PC-3 (cell line): ENCODE measurements at regions of chr1 and their contacts with region 1.

Region 1: GRCh38 chr1:20775700-20776099 is 11.4 kb downstream of the HP1BP3 start:
- DNase-seq: no peak
- ATAC-seq: no peak
- H3K4me3 ChIP-seq: no peak overlapping the region
- H3K27ac ChIP-seq: no peak overlapping the region
- H3K4me1 ChIP-seq: no peaks in the 10 kb centered on the region; the same call in 1 of the 2 replicates
- H3K27me3 ChIP-seq: no peaks in the 10 kb centered on the region
- CTCF ChIP-seq: no peak

Region 2: GRCh38 chr1:20931930-20932436 is 156.3 kb after region 1 on chr1:
- CTCF ChIA-PET with region 1: no interaction called
- POLR2A ChIA-PET with region 1: interaction called, 19 read pairs
- intact Hi-C with region 1: no loop called
- DNase-seq: no peak
- ATAC-seq: no peak
- H3K4me3 ChIP-seq: no peak overlapping the region
- H3K27ac ChIP-seq: no peak overlapping the region
- H3K4me1 ChIP-seq: no peaks in the 10 kb centered on the region
- H3K27me3 ChIP-seq: no peaks in the 10 kb centered on the region
- CTCF ChIP-seq: no peak

Region 3: DNA sequence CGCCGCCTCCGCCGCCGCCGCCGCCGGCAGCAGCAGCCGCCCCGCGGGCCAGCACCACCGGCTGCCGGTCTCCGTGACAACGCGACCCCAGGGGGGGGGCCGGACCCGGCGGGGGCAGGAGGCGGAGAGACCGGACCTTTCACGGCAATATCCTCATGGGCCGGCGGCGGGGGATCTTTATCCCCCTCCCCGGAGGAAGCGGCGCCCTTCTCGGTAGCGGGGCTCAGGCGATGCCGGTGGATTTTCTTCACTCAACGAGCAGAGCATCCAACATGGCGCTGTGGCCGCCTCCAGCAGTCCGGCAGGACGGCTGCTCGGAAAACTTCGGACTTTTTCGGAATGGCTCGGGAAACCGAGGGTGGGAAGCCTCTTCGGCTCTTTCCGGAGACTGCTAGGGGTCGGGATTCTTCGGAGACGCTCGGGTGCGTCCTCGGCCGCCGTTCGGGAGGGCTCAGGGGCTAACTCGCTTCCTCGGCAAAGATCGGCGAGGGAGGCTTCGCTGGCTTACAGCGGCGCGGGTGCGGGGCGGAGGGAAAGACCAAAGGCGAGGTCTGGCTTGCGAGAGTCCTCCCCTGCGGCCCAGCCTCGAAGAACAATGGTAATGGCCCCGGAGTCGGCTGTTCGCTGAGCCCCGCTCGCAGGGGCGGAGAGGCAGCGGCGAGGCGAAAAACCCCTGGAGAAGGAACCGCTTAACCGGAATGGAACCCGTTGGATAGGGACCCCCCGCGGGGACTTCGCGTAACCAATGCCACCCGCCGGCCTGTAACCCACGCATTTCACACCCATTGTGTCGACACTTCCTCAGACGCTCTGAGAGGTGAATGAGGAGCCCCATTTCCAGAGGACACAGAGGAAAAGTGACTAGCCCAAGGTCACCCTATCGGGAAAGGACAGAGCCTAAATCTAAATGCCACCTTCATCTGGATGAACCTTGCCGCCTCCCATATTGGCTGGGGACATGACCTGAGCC is 401.2 kb after region 1 on chr1 and contains the start of gene EIF4G3:
- CTCF ChIA-PET with region 1: no interaction called
- POLR2A ChIA-PET with region 1: no interaction called
- intact Hi-C with region 1: no loop called
- DNase-seq: peak; percentile 99
- ATAC-seq: peak; percentile 97
- H3K4me3 ChIP-seq: peak within 1 kb of the TSS; percentile 91
- H3K27ac ChIP-seq: no peak within 1 kb of the TSS; the same call in 1 of the 2 replicates
- H3K4me1 ChIP-seq: peaks cover 13% of the 10 kb centered on the region
- H3K27me3 ChIP-seq: no peaks in the 10 kb centered on the region
- CTCF ChIP-seq: no peak
- total RNA-seq, gene EIF4G3: 16.9 and 25.0 TPM in 2 replicates

Region 4: DNA sequence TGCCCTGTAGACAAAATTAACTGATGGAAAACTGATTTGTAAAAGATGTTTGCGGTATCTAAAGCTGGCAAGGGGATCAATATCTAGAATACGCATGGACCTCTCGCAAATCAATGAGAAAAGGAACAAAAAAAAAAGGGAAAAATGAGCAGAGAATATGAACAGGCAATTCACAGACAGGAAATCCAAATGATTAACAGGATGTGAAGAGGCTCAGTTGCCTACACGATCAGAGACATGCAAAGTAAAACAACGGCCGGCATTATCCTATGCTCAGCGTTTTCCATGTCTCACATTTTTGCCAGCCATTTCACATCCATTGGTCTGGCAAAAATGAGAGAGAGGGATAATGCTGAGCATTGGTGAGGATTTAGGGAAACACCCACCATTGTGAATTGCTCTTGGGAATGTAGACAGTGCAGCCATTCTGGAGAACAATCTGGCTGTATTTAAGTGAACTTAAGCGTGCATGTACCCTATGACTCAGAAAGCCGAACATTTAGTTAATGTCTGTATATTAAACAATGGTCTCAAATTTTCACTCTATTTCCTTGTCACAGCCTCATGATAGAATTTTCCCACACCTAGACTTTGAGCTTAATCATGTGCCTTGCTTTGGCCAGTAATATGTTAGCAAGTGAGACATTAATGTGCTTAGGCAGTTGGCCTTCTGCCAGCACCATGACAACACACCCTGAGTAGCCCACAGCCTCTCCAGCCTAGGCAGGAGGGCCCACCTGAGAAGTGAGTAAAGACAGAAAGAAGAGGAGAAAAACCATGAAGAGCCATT is 603.2 kb after region 1 on chr1:
- CTCF ChIA-PET with region 1: no interaction called
- POLR2A ChIA-PET with region 1: interaction called, 16 read pairs
- intact Hi-C with region 1: no loop called
- DNase-seq: peak; percentile 39
- ATAC-seq: peak; percentile 57
- H3K4me3 ChIP-seq: no peak overlapping the region
- H3K27ac ChIP-seq: peak overlapping the region; percentile 61
- H3K4me1 ChIP-seq: peaks cover 14% of the 10 kb centered on the region; the same call in 1 of the 2 replicates
- H3K27me3 ChIP-seq: no peaks in the 10 kb centered on the region
- CTCF ChIP-seq: no peak